AG04450 (cell line): ENCODE measurements at regions of chr15 and their contacts with region 1.

Region 1: DNA sequence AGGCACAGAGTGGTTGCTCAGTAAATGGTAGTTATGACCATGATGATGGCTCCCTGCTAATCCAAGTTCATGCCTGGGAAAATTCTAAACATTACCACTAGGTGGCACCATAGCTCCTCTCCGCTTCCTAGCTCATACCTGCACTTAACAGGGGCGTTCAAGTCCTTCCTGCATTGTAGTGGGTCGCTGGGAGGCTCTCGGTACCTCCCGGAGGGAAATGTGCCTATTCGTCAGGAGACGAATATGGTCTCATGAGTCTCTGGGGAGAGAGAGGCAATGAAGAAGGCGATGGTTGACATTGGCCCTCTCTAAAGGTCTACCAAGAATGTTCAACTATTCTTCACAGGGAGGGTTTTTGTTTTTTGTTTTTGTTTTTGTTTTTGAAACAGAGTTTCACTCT is 10.9 kb downstream of the MESP1 start:
- DNase-seq: peak; percentile 53
- H3K4me3 ChIP-seq: no peak overlapping the region
- H3K27ac ChIP-seq: no peak overlapping the region
- H3K27me3 ChIP-seq: peaks cover 22% of the 10 kb centered on the region
- CTCF ChIP-seq: peak; percentile 90

Region 2: GRCh38 chr15:88638626-88639372 is 1101.3 kb before region 1 on chr15 and contains the start of gene ISG20:
- CTCF ChIA-PET with region 1: no interaction called
- POLR2A ChIA-PET with region 1: no interaction called
- DNase-seq: peak; percentile 96
- H3K4me3 ChIP-seq: peak within 1 kb of the TSS; percentile 58
- H3K27ac ChIP-seq: peak within 1 kb of the TSS; percentile 99
- H3K27me3 ChIP-seq: no peaks in the 10 kb centered on the region
- CTCF ChIP-seq: peak; percentile 50
- polyA plus RNA-seq, gene ISG20: 5.2 and 5.5 TPM in 2 replicates

Region 3: GRCh38 chr15:89656116-89656815 is 83.9 kb before region 1 on chr15:
- CTCF ChIA-PET with region 1: no interaction called
- POLR2A ChIA-PET with region 1: interaction called, 12 read pairs
- DNase-seq: no peak
- H3K4me3 ChIP-seq: no peak overlapping the region
- H3K27ac ChIP-seq: no peak overlapping the region
- H3K27me3 ChIP-seq: no peaks in the 10 kb centered on the region
- CTCF ChIP-seq: no peak

Region 4: DNA sequence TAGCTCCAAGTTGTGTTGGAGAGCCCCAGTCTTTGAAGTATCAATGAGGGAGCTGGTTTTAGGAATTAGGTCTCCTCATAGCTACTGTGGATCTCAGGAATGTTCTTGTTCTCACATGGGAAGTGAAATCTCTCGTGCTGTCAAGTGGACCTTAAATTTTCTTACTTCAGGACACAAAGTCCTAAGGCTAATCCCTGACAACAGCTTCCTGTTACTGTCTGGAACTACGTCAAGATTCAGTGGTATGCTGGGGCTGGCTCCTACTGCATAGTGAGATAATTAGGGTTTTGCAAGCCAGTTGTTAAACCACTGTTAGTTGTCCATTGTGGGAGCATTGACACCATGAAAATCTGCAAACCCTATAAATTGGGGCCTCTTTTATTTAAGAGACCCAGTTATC is 11.9 kb before region 1 on chr15:
- CTCF ChIA-PET with region 1: interaction called, 11 read pairs
- POLR2A ChIA-PET with region 1: no interaction called
- DNase-seq: no peak
- H3K4me3 ChIP-seq: no peak overlapping the region
- H3K27ac ChIP-seq: no peak overlapping the region
- H3K27me3 ChIP-seq: peaks cover 36% of the 10 kb centered on the region
- CTCF ChIP-seq: no peak

Region 5: GRCh38 chr15:89760303-89761008 is 20.3 kb after region 1 on chr15:
- CTCF ChIA-PET with region 1: interaction called, 14 read pairs
- POLR2A ChIA-PET with region 1: no interaction called
- DNase-seq: no peak
- H3K4me3 ChIP-seq: no peak overlapping the region
- H3K27ac ChIP-seq: no peak overlapping the region
- H3K27me3 ChIP-seq: no peaks in the 10 kb centered on the region
- CTCF ChIP-seq: peak; percentile 98